AG04449 (cell line): ENCODE measurements at regions of chr17 and their contacts with region 1.

Region 1: DNA sequence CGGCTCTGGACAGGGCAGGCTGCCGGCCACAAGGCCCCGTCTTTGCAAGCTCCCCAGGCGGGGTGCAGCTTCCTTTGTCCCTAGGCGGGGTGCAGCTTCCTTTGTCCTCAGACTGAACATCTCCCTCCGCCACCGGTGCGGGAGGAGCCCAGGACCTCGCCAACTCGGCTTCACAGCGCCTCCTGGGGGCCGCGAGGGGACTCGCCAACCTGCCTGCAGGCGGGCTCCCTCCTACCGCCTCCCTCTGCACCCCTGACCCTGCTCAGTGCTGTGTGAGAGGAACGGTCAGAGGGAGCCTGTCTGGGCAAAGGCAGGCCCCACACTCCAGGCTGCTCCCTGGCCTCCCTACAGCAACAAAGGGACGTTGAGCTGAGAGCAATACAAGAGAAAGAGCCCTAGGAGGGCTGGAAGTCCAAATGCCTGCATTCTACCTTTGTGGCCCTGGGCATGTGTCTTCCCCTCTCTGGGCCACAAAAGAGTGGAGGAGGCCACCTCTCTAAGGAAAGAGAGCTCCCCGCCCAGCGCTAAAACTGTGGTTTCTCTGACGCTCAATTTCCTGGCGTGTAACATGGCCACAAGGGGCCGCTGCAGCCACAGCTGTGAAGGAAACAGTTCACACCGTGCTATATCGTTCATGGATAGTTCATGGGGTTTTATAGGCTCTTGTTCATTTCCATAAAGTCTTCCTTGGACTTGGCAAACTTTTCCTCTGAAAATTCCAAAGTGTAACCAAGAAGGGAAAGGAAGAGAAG is 20.9 kb upstream of the KRT19 start:
- DNase-seq: peak; percentile 38
- H3K4me3 ChIP-seq: peak overlapping the region; percentile 19
- CTCF ChIP-seq: peak; percentile 99

Region 2: DNA sequence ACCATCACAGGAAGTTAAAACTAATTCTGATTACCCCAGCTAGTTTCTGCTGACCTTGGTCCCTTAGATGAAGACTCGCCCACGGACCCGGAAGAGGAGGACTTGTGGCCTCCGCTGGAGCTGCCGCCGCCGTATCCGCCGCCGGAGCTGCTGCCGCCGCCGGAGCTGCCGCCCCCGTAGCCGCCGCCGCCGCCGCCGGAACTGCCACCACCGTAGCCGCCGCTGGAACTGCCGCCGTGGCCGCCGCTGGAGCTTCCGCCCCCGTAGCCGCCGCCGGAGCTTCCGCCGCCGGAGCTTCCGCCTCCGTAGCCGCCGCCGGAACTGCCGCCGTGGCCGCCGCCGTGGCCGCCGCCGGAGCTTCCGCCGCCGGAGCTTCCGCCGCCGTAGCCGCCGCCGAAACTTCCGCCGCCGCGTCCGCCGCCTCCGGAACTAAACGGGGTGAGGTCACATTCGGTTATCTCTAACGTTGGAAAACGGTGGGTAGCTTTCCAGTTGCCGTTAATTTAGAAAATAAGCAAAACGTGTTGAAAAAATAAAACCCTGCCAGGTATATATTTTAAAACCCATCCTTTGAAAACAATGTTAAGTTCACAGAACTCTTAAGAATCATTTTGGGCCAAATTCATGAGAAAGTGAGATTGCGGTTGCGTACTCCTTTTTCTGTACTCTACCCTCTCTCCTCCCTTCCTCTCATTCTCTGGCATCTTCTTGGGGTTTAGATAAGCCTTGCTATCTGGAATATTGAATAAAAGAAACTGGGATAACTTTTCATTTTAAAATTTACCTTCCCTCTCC is 730.1 kb before region 1 on chr17:
- CTCF ChIA-PET with region 1: interaction called, 17 read pairs
- POLR2A ChIA-PET with region 1: interaction called, 5 read pairs
- DNase-seq: no peak
- H3K4me3 ChIP-seq: peak overlapping the region; percentile 71
- CTCF ChIP-seq: no peak

Region 3: GRCh38 chr17:41071606-41072360 is 477.2 kb before region 1 on chr17:
- CTCF ChIA-PET with region 1: interaction called, 10 read pairs
- POLR2A ChIA-PET with region 1: no interaction called
- DNase-seq: no peak
- H3K4me3 ChIP-seq: no peak overlapping the region
- CTCF ChIP-seq: no peak

Region 4: DNA sequence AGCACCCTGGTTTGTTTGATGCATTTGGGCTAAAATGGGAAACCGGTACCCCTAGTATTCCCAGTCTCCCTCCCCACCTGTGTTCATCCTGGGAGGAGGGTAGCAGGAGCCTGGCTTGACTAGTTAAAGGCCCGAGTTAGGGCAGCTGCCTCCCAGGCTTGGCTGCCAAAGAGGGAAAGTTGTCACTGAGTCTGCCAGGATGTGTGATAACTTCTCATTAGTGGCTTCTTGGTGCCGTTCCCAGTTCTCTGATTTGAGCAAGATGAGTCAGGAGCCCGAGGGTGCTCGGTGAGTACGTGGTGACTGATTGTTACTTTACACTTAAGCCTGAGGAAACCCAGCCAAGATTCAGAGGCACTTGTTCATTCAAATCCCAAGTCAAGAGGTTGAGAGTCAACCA is 84.3 kb before region 1 on chr17:
- CTCF ChIA-PET with region 1: interaction called, 14 read pairs
- POLR2A ChIA-PET with region 1: interaction called, 3 read pairs
- DNase-seq: peak; percentile 88
- H3K4me3 ChIP-seq: no peak overlapping the region
- CTCF ChIP-seq: no peak

Region 5: DNA sequence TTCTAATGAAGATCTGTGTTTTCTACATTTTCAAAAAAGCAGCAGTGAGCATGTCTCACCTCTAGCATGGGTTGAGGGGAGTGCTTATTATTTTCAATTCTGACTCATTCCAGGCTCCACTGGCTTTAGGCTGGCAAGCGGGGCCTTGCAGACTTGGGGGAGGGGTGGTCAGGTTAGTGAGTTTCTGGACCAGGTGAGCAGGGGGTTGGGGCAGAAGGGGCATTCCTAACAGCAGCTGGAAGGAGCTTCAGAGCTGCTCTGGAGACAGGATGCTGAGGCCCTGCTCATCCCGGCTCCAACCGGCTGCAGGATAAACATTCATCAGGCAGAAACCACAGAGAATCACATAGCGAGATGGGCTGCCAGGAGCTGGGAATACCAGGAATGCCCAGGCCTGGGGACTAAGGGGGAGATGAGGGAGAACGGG is 10.4 kb before region 1 on chr17:
- CTCF ChIA-PET with region 1: interaction called, 38 read pairs
- POLR2A ChIA-PET with region 1: no interaction called
- DNase-seq: no peak
- H3K4me3 ChIP-seq: no peak overlapping the region
- CTCF ChIP-seq: no peak

Region 6: DNA sequence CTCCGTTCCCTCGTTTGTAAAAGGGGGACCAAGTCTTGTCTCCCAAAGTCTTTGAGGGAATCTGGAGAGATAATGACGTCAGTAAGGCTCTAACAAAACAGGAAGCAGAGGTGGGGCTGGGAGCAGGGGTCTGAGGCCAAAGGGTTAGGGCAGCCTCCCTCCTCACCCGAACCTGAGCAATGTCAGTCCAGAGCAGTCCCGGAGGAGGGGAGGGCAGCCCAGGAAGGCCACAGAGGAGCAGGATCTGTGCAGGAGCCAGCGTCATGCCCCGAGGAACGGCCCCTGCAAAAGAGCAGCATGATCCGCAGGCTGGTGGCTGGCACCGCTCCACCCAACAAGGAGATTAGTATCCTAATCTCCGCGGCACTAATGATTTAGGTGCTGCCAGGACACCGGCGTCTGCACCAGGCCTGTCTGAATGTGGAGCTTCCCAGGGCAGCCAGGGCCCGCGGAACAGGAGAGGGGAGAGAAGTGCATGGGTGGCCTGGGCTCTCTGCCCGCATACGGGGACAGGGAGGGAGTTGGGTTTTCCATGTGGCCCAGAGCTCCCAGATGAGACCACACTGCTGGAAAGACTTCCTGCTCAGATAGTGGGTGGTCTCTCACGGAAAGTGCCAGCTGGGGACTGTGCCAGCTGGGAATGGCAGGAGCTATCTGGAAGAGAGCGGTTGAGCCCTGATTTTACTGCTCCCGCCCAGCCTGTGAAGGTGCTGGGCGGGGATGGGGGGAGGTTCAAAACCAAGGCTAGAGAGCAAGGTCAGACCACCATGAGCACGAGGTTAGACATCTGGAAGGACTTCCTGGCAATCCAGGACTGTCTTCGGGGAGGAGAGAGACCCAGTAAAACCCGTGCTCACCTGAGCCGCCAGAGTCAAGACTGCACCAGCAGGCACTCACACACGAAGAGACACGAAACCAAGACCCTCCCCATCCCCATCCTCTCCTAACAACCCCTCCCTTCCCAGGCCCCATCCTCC is 86.4 kb after region 1 on chr17:
- CTCF ChIA-PET with region 1: interaction called, 19 read pairs
- POLR2A ChIA-PET with region 1: no interaction called
- DNase-seq: no peak
- H3K4me3 ChIP-seq: no peak overlapping the region
- CTCF ChIP-seq: no peak